Body of pancreas (tissue), 4 donors: ENCODE measurements at regions of chr18 and their contacts with region 1.

Region 1: DNA sequence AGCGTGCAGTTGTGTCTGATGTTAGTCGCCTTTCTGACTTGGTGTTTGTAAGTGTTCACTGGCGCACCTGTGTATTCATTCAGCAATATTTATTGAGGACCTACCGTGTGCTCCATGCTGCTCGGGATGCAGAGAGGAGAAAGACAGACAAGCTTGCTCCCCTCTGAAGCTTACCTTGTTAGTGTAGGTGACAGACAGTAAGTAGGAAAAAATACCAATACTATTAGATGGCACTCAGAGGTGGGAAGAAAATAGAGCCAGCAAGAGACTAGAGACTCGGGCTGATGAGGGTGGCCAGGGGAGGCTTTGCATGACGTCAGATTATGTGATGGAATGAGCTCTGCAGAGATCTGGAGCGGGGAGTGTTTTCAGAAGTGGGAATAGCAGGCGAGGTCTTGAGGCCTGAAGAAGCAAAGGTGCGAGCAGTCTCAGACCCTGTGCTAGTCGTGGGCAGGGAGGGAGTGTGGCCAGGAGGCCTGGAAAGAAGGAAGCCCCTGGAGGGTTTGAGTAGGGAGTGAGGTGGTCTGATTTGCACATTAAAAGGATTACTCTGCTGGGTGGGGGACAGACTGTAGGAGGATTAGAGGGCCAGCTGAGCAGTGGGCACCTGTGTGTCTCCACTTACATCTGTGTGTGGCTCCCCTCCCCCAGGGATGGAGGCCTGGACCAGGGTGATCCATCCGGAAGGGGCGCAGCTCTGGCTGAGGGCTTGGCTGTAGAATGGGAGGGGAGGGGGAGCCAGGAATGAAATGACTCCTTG is 11.8 kb downstream of the MTCL1 start:
- DNase-seq: no peak
- ATAC-seq: no peak
- H3K4me3 ChIP-seq: no peak overlapping the region
- H3K27ac ChIP-seq: no peak overlapping the region
- H3K4me1 ChIP-seq: peaks cover 33% of the 10 kb centered on the region
- H3K27me3 ChIP-seq: no peaks in the 10 kb centered on the region
- CTCF ChIP-seq: no peak
- POLR2A ChIP-seq: no peak

Region 2: GRCh38 chr18:8771930-8772329 is 54.7 kb after region 1 on chr18:
- intact Hi-C with region 1: loop called (anchors 10 kb)
- DNase-seq: peak; percentile 50 to 77 (median 64)
- ATAC-seq: no peak
- H3K4me3 ChIP-seq: no peak overlapping the region
- H3K27ac ChIP-seq: no peak overlapping the region
- H3K4me1 ChIP-seq: peaks cover 7% of the 10 kb centered on the region
- H3K27me3 ChIP-seq: no peaks in the 10 kb centered on the region
- CTCF ChIP-seq: no peak
- POLR2A ChIP-seq: no peak

Region 3: GRCh38 chr18:9392726-9393125 is 675.5 kb after region 1 on chr18:
- intact Hi-C with region 1: no loop called
- DNase-seq: no peak
- ATAC-seq: no peak
- H3K4me3 ChIP-seq: no peak overlapping the region
- H3K27ac ChIP-seq: no peak overlapping the region
- H3K4me1 ChIP-seq: no peaks in the 10 kb centered on the region
- H3K27me3 ChIP-seq: no peaks in the 10 kb centered on the region
- CTCF ChIP-seq: no peak
- POLR2A ChIP-seq: no peak